ENCODE measurements at regions of chr21 and their contacts with region 1.

Region 1: GRCh38 chr21:36344931-36345330 is 24.9 kb downstream of the MORC3 start:
- DNase-seq: no peak
- ATAC-seq: no peak
- H3K4me3 ChIP-seq: no peak overlapping the region
- H3K4me3 Mint-ChIP-seq: no peak overlapping the region
- H3K27ac ChIP-seq: no peak overlapping the region
- H3K27ac Mint-ChIP-seq: peak overlapping the region in 1 of 9 donors; percentile 42
- H3K4me1 ChIP-seq: no peaks in the 10 kb centered on the region
- H3K4me1 Mint-ChIP-seq: peaks cover 0 to 18% (median 5%) of the 10 kb centered on the region in 7 donors
- H3K27me3 ChIP-seq: no peaks in the 10 kb centered on the region
- H3K27me3 Mint-ChIP-seq: no peaks in the 10 kb centered on the region

Region 2: GRCh38 chr21:36379251-36379650 is 34.3 kb after region 1 on chr21:
- CTCF ChIA-PET with region 1: no interaction called
- POLR2A ChIA-PET with region 1: no interaction called
- intact Hi-C with region 1: loop called in 1 of 2 experiments (anchors 5 kb)
- DNase-seq: no peak
- ATAC-seq: no peak
- H3K4me3 ChIP-seq: no peak overlapping the region
- H3K4me3 Mint-ChIP-seq: no peak overlapping the region
- H3K27ac ChIP-seq: no peak overlapping the region
- H3K27ac Mint-ChIP-seq: peak overlapping the region in 4 of 9 donors; percentile 25 to 64 (median 41)
- H3K4me1 ChIP-seq: no peaks in the 10 kb centered on the region
- H3K4me1 Mint-ChIP-seq: peaks cover 0 to 8% (median 3%) of the 10 kb centered on the region in 7 donors
- H3K27me3 ChIP-seq: no peaks in the 10 kb centered on the region
- H3K27me3 Mint-ChIP-seq: no peaks in the 10 kb centered on the region

Region 3: DNA sequence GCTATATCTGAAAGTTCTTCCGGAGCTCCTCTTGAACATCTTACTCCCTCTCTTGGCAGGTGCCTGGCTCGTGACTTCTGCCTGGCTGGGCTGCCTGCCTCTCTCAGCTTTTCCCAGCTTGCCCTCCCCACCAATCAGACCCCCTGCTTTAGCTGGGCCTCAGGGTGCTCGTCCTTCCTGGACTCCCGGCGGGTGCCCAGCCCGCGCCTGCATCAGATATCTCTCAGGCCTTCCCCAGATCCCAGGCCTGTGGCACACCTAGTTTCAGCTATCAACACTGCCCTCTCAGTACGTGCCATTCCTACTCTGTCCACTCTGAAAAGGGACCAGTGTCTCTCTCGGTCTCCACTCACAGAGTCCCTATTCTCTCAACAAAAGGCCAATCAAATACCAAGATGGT is 231.5 kb after region 1 on chr21:
- CTCF ChIA-PET with region 1: no interaction called
- POLR2A ChIA-PET with region 1: no interaction called
- intact Hi-C with region 1: no loop called
- DNase-seq: no peak
- ATAC-seq: no peak
- H3K4me3 ChIP-seq: no peak overlapping the region
- H3K4me3 Mint-ChIP-seq: no peak overlapping the region
- H3K27ac ChIP-seq: no peak overlapping the region
- H3K27ac Mint-ChIP-seq: no peak overlapping the region
- H3K4me1 ChIP-seq: no peaks in the 10 kb centered on the region
- H3K4me1 Mint-ChIP-seq: peaks cover 0 to 7% (median 4%) of the 10 kb centered on the region in 7 donors
- H3K27me3 ChIP-seq: no peaks in the 10 kb centered on the region
- H3K27me3 Mint-ChIP-seq: peaks cover 0 to 9% (median 0%) of the 10 kb centered on the region in 5 donors

Measured in naive thymus-derived CD4-positive, alpha-beta T cell (primary cell).